ENCODE measurements at regions of chr7 and their contacts with region 1.

Region 1: DNA sequence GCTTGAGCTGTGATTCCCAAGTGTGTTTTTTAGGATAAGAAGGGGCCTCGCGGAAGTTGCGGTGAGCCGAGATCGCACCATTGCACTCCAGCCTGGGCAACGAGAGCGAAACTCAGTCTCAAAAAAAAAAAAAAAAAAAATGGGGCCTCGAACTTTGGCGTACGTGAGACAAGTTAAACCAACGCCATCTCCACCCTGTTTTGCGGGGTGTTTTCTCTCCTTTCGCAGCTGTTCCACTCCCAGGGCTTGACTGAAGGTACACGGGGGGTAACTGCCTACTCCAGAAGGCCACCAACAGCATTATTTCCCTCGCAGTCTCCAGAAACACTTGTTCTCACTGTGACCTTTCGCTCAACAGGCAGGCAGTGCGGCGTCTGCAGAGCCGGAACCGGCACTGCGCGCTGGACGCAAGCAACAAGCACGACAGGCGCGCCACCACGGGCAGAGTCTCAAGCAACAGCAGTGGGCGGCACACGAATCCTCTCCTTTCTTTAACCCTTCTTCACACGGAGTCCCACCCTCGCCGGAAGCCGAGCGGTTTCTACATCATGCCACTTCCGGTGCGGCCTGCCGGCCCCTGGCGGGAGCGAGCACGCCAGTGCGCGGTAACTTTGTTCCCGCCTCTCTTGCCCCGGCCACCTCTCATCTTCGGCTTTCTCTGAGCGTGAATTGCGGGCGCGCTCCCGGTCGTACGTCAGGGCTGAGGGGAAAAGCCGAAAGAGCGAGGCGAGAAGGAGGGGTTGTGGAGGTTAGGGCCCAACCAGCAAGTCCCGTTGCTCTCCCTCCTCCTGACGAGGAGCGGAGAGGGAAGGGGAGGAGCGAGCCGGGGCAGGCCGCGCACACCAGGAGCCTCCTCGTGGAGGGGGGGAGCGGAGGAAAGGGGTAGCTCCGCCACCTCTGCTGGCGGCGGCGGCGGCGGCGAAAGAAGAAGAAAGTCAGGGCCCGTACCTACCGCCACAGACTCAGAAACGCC is 814 bp upstream of the CDK13 start:
- DNase-seq: peak; percentile 99
- H3K4me3 ChIP-seq: peak overlapping the region; percentile 74 to 96 (median 92)
- H3K27ac ChIP-seq: peak overlapping the region; percentile 97 to 99 (median 98)
- H3K4me1 ChIP-seq: peaks cover 14 to 32% (median 25%) of the 10 kb centered on the region in 4 donors
- H3K27me3 ChIP-seq: no peaks in the 10 kb centered on the region
- CTCF ChIP-seq: no peak
- EP300 ChIP-seq: no peak
- POLR2A ChIP-seq: peak; percentile 87

Region 2: GRCh38 chr7:39623018-39623731 is 326.1 kb before region 1 on chr7 and contains the start of gene RALA:
- intact Hi-C with region 1: loop called (anchors 5 kb)
- DNase-seq: peak; percentile 95
- H3K4me3 ChIP-seq: peak within 1 kb of the TSS; percentile 83 to 98 (median 92)
- H3K27ac ChIP-seq: peak within 1 kb of the TSS; percentile 87 to 90 (median 88)
- H3K4me1 ChIP-seq: peaks cover 28 to 44% (median 40%) of the 10 kb centered on the region in 4 donors
- H3K27me3 ChIP-seq: no peaks in the 10 kb centered on the region
- CTCF ChIP-seq: no peak
- EP300 ChIP-seq: no peak
- POLR2A ChIP-seq: no peak
- total RNA-seq, gene RALA: 12.3 to 25.1 (median 19.6) TPM

Region 3: DNA sequence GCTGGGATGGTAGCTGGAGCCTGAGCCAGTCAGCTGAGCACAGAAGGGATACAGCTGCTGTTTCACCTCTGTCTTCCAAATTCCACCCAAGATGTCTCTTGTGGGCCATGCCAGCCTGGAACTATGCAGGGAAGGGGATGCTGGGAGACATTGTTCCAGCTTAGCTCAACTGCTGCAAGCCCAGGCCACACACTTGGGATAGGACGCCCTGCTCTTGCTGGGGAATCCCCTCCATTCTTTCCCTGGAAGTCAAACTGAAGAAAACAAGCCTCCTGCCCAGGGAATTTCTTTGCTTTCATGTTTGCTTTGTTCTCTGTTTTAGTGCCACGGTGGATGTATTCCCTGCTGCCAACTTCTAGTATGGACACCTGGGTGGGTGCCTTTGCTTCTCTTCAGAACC is 54.3 kb before region 1 on chr7:
- intact Hi-C with region 1: loop called (anchors 5 kb)
- DNase-seq: no peak
- H3K4me3 ChIP-seq: no peak overlapping the region
- H3K27ac ChIP-seq: no peak overlapping the region
- H3K4me1 ChIP-seq: peaks cover 0 to 6% (median 5%) of the 10 kb centered on the region in 4 donors
- H3K27me3 ChIP-seq: peaks cover 0 to 5% (median 0%) of the 10 kb centered on the region in 4 donors
- CTCF ChIP-seq: no peak
- EP300 ChIP-seq: no peak
- POLR2A ChIP-seq: no peak

Region 4: DNA sequence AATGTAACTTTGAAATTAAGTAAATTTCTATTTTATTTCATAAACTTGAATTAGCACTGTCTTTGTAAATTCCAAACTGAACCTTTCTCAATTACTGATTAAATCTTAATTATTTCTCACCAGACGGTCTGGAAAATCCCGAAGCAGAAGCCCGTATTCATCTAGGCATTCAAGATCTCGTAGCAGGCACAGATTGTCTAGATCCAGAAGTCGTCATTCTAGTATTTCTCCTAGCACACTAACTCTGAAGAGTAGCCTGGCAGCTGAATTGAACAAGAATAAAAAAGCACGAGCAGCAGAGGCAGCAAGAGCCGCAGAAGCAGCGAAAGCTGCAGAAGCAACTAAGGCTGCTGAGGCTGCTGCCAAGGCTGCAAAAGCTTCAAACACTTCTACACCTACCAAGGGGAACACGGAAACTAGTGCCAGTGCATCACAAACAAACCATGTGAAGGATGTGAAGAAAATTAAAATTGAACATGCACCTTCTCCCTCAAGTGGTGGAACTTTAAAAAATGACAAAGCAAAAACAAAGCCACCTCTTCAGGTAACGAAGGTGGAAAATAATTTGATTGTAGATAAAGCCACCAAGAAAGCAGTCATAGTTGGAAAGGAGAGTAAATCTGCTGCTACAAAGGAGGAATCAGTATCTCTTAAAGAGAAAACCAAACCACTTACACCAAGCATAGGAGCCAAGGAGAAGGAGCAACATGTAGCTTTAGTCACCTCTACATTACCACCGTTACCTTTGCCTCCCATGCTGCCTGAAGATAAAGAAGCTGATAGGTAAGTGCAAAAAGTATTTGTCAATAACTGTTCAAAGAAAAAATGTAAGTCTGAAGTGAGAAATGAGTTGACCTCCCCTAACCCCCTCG is 38.5 kb after region 1 on chr7:
- intact Hi-C with region 1: no loop called
- DNase-seq: no peak
- H3K4me3 ChIP-seq: no peak overlapping the region
- H3K27ac ChIP-seq: no peak overlapping the region
- H3K4me1 ChIP-seq: peaks cover 15 to 47% (median 41%) of the 10 kb centered on the region in 4 donors
- H3K27me3 ChIP-seq: no peaks in the 10 kb centered on the region
- CTCF ChIP-seq: no peak
- EP300 ChIP-seq: no peak
- POLR2A ChIP-seq: no peak

Region 5: GRCh38 chr7:40057292-40057691 is 108.0 kb after region 1 on chr7:
- intact Hi-C with region 1: loop called (anchors 5 kb)
- DNase-seq: no peak
- H3K4me3 ChIP-seq: no peak overlapping the region
- H3K27ac ChIP-seq: no peak overlapping the region
- H3K4me1 ChIP-seq: peaks cover 0 to 22% (median 20%) of the 10 kb centered on the region in 4 donors
- H3K27me3 ChIP-seq: no peaks in the 10 kb centered on the region
- CTCF ChIP-seq: no peak
- EP300 ChIP-seq: no peak
- POLR2A ChIP-seq: no peak

Region 6: GRCh38 chr7:40134428-40135316 is 185.4 kb after region 1 on chr7 and contains the starts of genes MPLKIP and SUGCT:
- intact Hi-C with region 1: loop called (anchors 2 kb)
- DNase-seq: peak; percentile 96
- H3K4me3 ChIP-seq: peak within 1 kb of the TSS; percentile 85 to 98 (median 96)
- H3K27ac ChIP-seq: peak within 1 kb of the TSS; percentile 89 to 93 (median 92)
- H3K4me1 ChIP-seq: peaks cover 24 to 46% (median 40%) of the 10 kb centered on the region in 4 donors
- H3K27me3 ChIP-seq: no peaks in the 10 kb centered on the region
- CTCF ChIP-seq: peak; percentile 91 to 100 (median 98)
- EP300 ChIP-seq: no peak
- POLR2A ChIP-seq: no peak
- total RNA-seq, gene MPLKIP: 18.7 to 45.8 (median 32.0) TPM
- total RNA-seq, gene SUGCT: 7.8 to 15.0 (median 12.8) TPM

Measured in esophagus muscularis mucosa (tissue), 4 donors.